A673 (cell line): ENCODE measurements at regions of chr2 and their contacts with region 1.

Region 1: GRCh38 chr2:96024336-96025193 is 10.2 kb downstream of the GPAT2 start:
- DNase-seq: no peak
- H3K4me3 ChIP-seq: no peak overlapping the region
- H3K27ac ChIP-seq: no peak overlapping the region
- H3K4me1 ChIP-seq: no peaks in the 10 kb centered on the region
- H3K27me3 ChIP-seq: no peaks in the 10 kb centered on the region
- CTCF ChIP-seq: no peak

Region 2: DNA sequence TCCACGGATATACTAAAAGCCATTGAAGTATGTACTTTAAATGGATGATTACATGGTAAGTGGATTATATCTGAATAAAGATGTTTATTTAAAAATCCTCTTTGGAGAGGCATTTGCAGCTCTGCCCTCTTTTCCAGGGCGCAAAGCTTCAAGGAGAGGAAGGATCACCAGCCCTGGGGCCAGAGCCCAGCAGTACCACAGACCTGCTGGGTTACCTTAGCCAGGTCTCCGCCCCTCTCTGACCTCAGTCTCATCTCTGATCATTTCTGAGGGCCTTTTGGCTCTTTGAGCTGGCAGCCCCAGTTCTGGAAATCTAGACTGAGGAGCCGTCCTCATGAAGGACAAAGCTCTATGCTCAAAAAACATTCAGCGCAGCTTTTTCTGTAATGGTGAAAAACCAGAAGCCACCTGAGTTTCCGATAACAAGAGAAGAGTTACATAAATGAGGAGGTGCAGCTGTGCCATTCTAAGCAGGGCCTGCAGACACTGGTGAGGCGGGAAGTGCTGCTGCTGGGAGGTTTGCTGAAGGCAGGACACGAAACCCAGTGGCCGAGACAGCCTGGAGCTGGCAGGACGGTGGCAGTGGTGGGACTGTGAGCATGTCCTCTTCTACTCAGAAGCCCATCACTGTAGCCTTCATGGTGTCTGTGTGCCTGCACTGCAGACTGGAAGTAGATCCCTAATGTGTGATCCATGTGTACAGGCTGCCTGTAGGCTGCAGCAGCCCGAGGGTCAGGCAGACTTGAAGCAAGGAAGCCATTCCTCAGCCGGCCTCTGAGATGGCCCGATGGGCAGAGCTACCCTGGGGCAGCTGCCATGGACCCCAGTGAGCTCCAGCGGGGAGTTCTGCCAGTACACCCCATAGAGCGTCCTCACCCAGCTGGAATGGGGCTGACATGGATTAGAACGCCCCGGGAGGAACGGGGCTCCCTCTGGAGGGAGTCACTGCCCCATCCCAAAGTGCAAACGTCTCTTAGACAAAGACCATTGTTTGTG is 64.1 kb after region 1 on chr2:
- CTCF ChIA-PET with region 1: interaction called, 14 read pairs
- POLR2A ChIA-PET with region 1: no interaction called
- intact Hi-C with region 1: no loop called
- DNase-seq: no peak
- H3K4me3 ChIP-seq: no peak overlapping the region
- H3K27ac ChIP-seq: no peak overlapping the region
- H3K4me1 ChIP-seq: no peaks in the 10 kb centered on the region
- H3K27me3 ChIP-seq: no peaks in the 10 kb centered on the region
- CTCF ChIP-seq: no peak

Region 3: GRCh38 chr2:97844311-97844859 is 1819.8 kb after region 1 on chr2:
- CTCF ChIA-PET with region 1: no interaction called
- POLR2A ChIA-PET with region 1: no interaction called
- intact Hi-C with region 1: no loop called
- DNase-seq: no peak
- H3K4me3 ChIP-seq: no peak overlapping the region
- H3K27ac ChIP-seq: no peak overlapping the region
- H3K4me1 ChIP-seq: no peaks in the 10 kb centered on the region
- H3K27me3 ChIP-seq: no peaks in the 10 kb centered on the region
- CTCF ChIP-seq: no peak